Naive thymus-derived CD8-positive, alpha-beta T cell (primary cell): ENCODE measurements at regions of chr15 and their contacts with region 1.

Region 1: DNA sequence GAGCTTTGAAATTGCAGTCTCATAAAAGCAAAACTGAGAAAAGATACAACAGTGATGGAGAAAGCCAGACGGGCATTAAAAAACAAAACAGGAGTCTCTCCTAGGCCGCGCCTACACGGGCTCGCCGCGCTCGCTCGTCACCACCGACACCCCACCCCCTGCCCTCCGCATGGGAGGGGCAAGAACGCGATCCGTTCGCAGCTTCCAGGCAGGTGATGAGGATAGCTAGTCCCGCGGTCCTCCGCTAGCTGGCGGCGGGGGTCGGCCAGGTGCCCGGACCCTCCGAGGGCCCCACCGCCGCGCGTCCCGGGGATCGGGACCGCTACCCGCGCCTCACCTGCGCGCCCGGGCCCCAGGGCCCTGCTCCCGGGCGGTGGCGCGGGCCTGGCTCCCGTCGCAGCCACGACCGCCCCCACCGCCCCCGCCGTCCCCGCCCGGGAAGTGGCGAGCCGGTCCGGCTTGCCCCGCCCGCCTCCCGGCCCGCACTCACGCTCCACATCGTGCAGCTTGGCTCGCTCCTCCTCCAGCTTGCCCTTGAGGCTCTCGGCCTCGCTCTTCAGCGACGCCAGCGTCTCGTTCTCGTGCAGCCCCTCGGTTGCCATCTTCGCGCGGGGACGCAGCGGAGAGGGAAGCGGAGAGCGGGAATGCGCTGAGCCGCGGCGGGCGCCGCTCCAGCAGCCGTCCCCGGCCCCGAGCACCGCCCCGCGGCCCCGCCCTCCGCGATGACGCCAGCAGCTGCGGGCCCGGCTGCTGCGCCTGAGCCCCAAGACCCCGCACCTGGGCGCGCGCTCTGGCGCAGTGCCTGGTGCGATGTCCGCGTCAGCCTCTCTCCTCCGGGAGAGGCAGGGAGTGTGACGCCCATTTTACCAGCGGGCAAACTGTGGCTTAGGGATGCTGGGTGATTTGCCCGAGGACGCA is 11.7 kb downstream of the GNB5 start:
- DNase-seq: peak; percentile 82 to 94 (median 90)
- ATAC-seq: peak; percentile 80 to 81
- H3K4me3 Mint-ChIP-seq: peak overlapping the region; percentile 88 to 100 (median 95)
- H3K27ac Mint-ChIP-seq: peak overlapping the region; percentile 88 to 99 (median 99)
- H3K4me1 Mint-ChIP-seq: peaks cover 15 to 52% (median 42%) of the 10 kb centered on the region in 4 donors
- H3K27me3 Mint-ChIP-seq: no peaks in the 10 kb centered on the region

Region 2: GRCh38 chr15:51971375-51972133 is 208.0 kb before region 1 on chr15 and contains the start of gene LEO1:
- POLR2A ChIA-PET with region 1: interaction called, 26 read pairs
- DNase-seq: peak; percentile 67 to 95 (median 90)
- ATAC-seq: peak; percentile 87
- H3K4me3 Mint-ChIP-seq: peak within 1 kb of the TSS; percentile 91 to 100 (median 98)
- H3K27ac Mint-ChIP-seq: peak within 1 kb of the TSS; percentile 94 to 100 (median 98)
- H3K4me1 Mint-ChIP-seq: peaks cover 10 to 33% (median 22%) of the 10 kb centered on the region in 4 donors
- H3K27me3 Mint-ChIP-seq: peaks cover 0 to 3% (median 0%) of the 10 kb centered on the region in 5 donors
- polyA plus RNA-seq, gene LEO1: 15.0 to 26.5 (median 19.6) TPM

Region 3: DNA sequence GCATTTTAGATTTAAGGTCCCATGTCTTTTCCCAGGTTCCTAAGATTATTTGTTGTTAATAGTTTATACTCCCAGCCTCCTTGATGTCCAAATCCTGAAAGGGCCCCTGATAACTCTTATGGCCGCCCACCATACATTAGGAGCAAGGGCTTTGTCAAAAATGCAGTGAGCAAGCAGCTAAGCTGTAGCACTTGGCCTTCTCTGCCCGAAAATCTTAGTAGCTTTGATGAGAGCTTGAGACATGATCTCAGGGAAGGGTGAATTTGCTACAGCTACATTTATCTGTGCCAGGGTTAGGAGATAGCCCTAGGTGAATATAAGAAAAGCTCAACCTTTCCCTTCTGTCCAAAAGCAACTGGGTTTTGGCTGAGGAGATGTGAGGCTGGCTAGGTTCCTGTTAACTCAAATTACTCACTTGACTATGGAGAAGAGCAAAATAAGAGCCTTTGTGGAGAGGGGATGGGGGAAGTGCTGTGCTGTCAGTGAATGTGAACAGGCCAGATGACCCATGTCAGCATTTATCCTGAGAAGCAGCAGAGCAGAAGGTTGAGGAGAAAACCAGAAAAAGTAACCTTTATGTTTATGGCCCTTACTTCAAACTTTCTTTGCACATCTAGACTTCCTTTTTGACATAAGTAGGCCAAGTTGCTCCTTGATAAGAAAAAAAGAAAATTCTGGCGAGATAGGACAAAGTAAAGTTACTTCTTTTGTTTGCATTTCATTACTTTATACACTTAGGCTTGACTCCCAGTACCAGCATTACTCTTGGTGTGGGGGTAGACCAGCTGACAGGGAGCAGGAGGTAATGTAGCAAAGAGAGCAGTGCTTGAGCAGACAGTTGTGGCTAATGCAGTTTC is 139.4 kb before region 1 on chr15:
- POLR2A ChIA-PET with region 1: interaction called, 10 read pairs
- DNase-seq: no peak
- ATAC-seq: peak in 1 of 2 donors; percentile 18
- H3K4me3 Mint-ChIP-seq: peak overlapping the region in 4 of 10 donors; percentile 3 to 31 (median 5)
- H3K27ac Mint-ChIP-seq: peak overlapping the region; percentile 41 to 83 (median 66)
- H3K4me1 Mint-ChIP-seq: peaks cover 26 to 68% (median 61%) of the 10 kb centered on the region in 4 donors
- H3K27me3 Mint-ChIP-seq: no peaks in the 10 kb centered on the region

Region 4: DNA sequence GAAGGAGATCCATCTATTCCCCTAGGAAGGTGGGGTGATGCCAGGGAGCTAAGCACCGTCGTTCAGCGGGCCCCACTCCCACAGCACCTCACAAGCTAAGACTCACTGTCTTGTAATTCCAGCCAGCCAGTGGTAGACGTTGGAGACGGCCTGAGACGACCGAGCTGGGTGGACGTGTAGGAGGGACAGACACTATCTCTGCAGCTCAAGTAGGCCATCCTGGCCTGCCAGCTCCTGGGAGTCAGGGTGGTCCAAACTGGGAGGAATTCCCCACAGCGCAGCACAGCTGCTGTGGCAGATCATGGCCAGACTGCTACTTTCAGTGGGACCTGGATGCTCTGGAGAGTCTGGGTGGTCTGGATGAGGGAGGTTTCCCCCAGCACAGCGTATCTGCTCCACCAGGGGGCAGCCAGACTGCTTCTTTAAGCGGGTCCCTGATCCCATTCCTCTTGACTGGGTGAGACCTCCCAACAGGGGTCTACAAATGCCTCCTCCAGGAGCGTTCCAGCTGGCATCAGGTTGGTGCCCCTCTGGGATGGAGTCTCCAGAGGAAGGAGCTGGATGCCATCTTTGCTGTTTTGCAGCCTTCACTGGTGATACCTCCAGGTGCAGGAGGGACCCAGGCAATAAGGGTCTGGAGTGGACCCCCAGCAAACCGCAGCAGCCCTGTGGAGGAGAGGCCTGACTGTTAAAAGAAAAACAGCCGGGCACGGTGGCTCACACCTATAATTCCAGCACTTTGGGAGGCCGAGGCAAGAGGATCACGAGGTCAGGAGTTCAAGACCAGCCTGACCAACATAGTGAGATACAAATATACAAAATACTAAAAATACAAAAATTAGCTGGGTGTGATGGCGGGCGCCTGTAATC is 16.0 kb before region 1 on chr15:
- POLR2A ChIA-PET with region 1: interaction called, 19 read pairs
- DNase-seq: peak in 3 of 10 donors; percentile 14 to 30 (median 19)
- ATAC-seq: no peak
- H3K4me3 Mint-ChIP-seq: no peak overlapping the region
- H3K27ac Mint-ChIP-seq: peak overlapping the region in 1 of 10 donors; percentile 52
- H3K4me1 Mint-ChIP-seq: peaks cover 21 to 43% (median 35%) of the 10 kb centered on the region in 4 donors
- H3K27me3 Mint-ChIP-seq: no peaks in the 10 kb centered on the region

Region 5: GRCh38 chr15:52221730-52222129 is 42.2 kb after region 1 on chr15:
- POLR2A ChIA-PET with region 1: interaction called, 18 read pairs
- DNase-seq: peak in 1 of 10 donors; percentile 4
- ATAC-seq: no peak
- H3K4me3 Mint-ChIP-seq: peak overlapping the region; percentile 55 to 83 (median 70)
- H3K27ac Mint-ChIP-seq: peak overlapping the region; percentile 75 to 95 (median 92)
- H3K4me1 Mint-ChIP-seq: peaks cover 14 to 31% (median 23%) of the 10 kb centered on the region in 4 donors
- H3K27me3 Mint-ChIP-seq: no peaks in the 10 kb centered on the region

Region 6: DNA sequence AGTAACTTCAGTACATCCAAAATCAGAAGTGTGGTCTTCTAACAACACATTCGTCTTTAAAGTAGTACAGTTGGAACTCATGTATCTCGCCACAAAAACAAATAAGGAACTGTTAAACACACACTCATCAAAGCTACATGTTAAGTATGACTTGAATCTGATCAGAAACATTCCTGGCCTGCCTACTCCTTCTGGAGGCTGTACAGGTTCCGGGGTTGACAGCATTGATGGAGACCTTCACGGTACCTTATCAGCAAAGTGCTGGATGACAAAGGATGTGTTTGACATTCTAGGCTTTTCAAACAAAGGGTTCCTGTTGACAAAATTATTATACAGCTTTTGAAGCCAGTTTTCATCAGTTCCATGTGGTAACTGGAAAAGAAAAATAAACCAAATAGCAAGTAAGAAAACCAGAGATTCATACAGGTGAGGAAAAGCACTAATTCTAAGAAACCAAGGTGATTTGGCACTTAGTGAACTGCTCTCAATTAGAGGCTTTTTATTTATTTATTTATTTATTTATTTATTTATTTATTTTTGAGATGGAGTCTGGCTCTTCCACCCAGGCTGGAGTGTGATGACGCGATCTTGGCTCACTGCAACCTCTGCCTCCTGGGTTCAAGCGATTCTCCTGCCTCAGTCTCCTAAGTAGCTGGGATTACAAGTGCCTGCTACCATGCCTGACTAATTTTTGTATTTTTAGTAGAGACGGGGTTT is 71.8 kb after region 1 on chr15:
- POLR2A ChIA-PET with region 1: no interaction called
- DNase-seq: no peak
- ATAC-seq: no peak
- H3K4me3 Mint-ChIP-seq: no peak overlapping the region
- H3K27ac Mint-ChIP-seq: no peak overlapping the region
- H3K4me1 Mint-ChIP-seq: peaks cover under 1 to 26% (median 5%) of the 10 kb centered on the region in 4 donors
- H3K27me3 Mint-ChIP-seq: peaks cover 0 to 4% (median 0%) of the 10 kb centered on the region in 5 donors